ENCODE measurements at regions of chr5 and their contacts with region 1.

Region 1: GRCh38 chr5:146049014-146049703 is 56.2 kb downstream of the PLAC8L1 start:
- DNase-seq: peak; percentile 76
- H3K4me3 ChIP-seq: no peak overlapping the region
- H3K27ac ChIP-seq: no peak overlapping the region
- H3K4me1 ChIP-seq: peaks cover 5% of the 10 kb centered on the region
- H3K27me3 ChIP-seq: no peaks in the 10 kb centered on the region
- CTCF ChIP-seq: peak; percentile 54

Region 2: GRCh38 chr5:145246961-145247744 is 802.0 kb before region 1 on chr5:
- intact Hi-C with region 1: no loop called
- DNase-seq: no peak
- H3K4me3 ChIP-seq: no peak overlapping the region
- H3K27ac ChIP-seq: no peak overlapping the region
- H3K4me1 ChIP-seq: no peaks in the 10 kb centered on the region
- H3K27me3 ChIP-seq: no peaks in the 10 kb centered on the region
- CTCF ChIP-seq: no peak

Region 3: DNA sequence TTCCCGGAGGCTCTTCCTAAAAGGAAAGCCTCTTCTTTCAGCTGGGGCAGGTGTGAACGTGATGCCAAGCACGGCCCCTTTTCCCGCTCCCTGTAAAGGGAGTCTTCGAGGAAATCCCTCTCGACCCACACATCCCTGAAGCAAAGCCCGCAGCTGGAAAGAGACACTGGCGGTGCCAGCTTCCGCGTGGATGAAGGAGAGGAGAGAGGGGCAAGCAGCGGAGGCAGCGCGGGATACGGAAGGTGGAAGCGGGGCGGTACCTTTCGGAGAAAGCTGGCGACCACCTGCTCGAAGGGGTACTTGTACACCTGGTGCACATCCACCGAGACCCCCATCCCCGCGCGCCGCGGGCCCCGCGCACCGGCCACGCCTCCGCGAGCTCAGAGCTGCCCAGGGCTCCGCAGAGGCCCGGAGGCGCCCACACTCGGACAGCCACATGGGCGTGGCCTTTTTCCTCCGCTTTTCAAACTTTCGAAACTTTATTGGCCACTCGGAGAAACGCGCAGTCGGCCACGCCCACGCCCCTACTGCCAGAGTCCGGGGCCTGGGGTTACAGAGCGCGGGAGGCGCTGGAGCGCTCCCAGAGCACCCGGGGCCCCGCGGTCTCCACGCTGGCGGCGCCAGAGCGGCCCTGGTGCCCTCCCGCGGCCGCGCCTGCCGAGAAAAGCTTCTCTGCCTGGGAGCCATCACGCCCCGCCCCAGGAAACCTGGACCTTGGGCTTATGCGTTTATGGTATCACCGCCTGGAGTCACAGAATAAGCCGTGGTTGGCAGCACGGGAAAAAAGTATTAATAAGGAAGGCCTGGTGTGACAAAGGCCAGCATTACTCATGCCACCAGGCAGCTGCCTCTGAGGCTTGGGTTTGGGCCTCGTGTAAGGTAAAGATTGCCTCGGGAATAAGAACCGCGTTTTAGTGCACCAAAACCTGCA is 214.0 kb before region 1 on chr5 and contains the start of gene PRELID2:
- intact Hi-C with region 1: loop called (anchors 10 kb)
- DNase-seq: peak; percentile 96
- H3K4me3 ChIP-seq: peak within 1 kb of the TSS; percentile 69
- H3K27ac ChIP-seq: peak within 1 kb of the TSS; percentile 85
- H3K4me1 ChIP-seq: no peaks in the 10 kb centered on the region
- H3K27me3 ChIP-seq: no peaks in the 10 kb centered on the region
- CTCF ChIP-seq: no peak
- total RNA-seq, gene PRELID2: 96.2 to 105 TPM

Region 4: DNA sequence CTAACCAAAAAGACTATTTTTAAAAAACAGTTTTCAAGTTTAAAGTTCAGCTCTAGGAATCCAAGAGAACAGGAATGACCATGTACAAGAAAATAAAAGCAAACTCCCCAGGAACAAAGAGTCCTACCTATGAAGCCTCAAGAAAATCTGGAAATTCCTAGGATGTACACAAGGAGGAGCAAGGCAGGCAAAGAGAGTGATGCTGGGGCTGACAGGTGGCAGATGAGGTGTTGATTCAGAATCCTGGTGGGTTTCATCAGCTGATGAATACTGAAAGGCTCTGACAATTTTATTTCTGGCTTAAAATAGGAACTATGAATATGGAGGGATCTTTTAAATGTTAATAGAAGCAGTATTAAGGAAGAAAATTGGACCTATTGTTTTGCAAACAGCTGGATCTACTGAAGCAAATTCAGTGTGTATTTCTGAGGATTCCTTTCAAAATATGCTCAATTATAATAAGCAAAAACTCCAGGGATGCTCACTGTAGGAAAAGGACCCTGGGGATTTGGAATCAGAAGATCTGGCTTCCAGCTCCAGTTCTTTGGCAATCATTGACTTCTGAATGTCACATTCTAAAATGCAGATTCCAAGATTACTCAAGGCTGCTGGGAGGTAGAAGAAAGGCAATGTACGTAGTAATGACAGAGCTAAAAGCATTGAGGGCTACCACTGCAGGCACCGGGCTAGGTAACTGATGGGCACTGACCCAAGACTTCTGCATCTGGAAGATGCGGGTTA is 140.8 kb before region 1 on chr5:
- intact Hi-C with region 1: loop called (anchors 5 kb)
- DNase-seq: no peak
- H3K4me3 ChIP-seq: no peak overlapping the region
- H3K27ac ChIP-seq: no peak overlapping the region
- H3K4me1 ChIP-seq: no peaks in the 10 kb centered on the region
- H3K27me3 ChIP-seq: no peaks in the 10 kb centered on the region
- CTCF ChIP-seq: peak; percentile 29